Activated CD4-positive, alpha-beta T cell treated with anti-CD3 and anti-CD28 coated beads, Interleukin-2, amount 10 ng/mL, durations not matched to agents 24 days and 14 days (primary cell): ENCODE measurements at regions of chr3 and their contacts with region 1.

Region 1: GRCh38 chr3:157174649-157175498 is 14.9 kb upstream of the CCNL1 start:
- DNase-seq: peak; percentile 99
- H3K4me3 Mint-ChIP-seq: peak overlapping the region; percentile 89
- H3K27ac Mint-ChIP-seq: peak overlapping the region; percentile 99
- H3K4me1 Mint-ChIP-seq: peaks cover 25% of the 10 kb centered on the region
- H3K27me3 Mint-ChIP-seq: peaks cover 2% of the 10 kb centered on the region

Region 2: GRCh38 chr3:156554842-156555687 is 619.8 kb before region 1 on chr3 and contains the start of gene SSR3:
- intact Hi-C with region 1: loop called (anchors 2 kb)
- DNase-seq: peak; percentile 100
- H3K4me3 Mint-ChIP-seq: peak within 1 kb of the TSS; percentile 97
- H3K27ac Mint-ChIP-seq: peak within 1 kb of the TSS; percentile 96
- H3K4me1 Mint-ChIP-seq: peaks cover 48% of the 10 kb centered on the region
- H3K27me3 Mint-ChIP-seq: no peaks in the 10 kb centered on the region
- total RNA-seq, gene SSR3: 151 and 153 TPM in 2 replicates

Region 3: DNA sequence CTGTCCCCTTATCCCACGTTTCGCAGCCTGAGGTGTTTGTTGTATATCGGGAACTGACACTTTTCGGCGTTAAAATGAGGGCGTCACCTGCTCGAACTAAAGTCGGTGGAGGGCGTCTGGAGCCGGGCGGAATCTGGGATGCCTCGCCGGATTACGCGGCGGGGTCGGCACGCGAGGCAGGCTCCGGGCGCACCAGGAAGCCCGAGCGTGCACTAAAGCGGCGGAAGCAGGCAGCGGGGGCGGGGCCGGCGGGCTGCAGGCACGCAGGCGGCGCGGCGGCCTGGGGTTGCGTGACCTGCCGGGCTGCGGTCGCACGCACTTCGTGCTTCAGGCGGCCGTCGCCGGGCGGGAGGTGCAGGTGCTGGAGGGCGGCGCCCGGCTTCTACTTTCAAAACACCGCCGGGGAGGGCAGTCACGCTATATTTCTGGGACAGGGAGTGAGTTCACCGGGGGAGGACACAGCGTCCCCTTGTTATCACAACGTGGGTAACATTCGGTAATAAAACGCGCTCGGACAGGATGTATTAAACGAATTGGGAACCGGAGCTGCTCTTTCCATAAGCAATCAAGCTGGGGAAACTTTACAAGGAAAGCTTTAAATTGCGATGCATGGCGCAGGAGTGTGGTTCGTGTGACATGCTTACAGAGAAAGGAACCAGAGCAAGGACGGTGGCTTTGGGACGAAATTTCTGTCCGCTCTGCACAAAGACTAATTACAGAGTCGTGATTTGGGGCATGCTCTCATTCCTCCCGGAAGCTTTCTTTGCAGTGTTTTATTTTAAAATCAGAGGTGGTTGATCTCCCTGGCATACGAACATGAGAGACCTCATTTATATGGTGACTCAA is 357.9 kb before region 1 on chr3:
- intact Hi-C with region 1: loop called (anchors 1 kb)
- DNase-seq: peak; percentile 97
- H3K4me3 Mint-ChIP-seq: peak overlapping the region; percentile 92
- H3K27ac Mint-ChIP-seq: peak overlapping the region; percentile 98
- H3K4me1 Mint-ChIP-seq: peaks cover 52% of the 10 kb centered on the region
- H3K27me3 Mint-ChIP-seq: no peaks in the 10 kb centered on the region

Region 4: DNA sequence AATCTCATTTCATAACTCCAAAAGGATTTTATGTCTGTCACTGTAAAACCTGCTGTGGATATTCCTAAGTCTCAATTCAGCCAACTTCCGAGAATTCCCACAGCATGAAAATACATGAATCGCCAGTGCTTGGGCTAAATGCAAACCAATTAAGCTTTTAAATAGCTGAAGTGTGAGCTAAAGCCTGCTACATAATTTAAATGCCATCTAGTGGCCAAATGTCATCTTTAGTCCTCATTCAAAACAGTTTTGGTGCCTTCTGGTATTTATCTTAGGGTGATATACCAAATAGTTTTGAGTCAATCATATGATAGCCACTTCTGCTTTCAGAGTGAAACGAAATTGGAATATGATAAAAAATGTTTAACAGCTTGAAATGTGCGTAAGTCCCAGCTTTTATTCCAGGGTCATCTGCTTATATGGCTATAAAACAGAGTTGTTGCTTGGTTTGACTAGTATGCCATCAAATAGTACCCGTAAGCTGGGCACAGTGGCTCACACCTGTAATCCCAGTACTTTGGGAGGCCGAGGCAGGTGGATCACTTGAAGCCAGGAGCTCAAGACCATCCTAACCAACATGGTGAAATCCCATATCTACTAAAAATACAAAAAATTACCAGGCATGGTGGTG is 26.9 kb after region 1 on chr3:
- intact Hi-C with region 1: loop called (anchors 2 kb)
- DNase-seq: peak; percentile 58
- H3K4me3 Mint-ChIP-seq: no peak overlapping the region
- H3K27ac Mint-ChIP-seq: no peak overlapping the region
- H3K4me1 Mint-ChIP-seq: no peaks in the 10 kb centered on the region
- H3K27me3 Mint-ChIP-seq: peaks cover 5% of the 10 kb centered on the region

Region 5: GRCh38 chr3:157239082-157239704 is 64.3 kb after region 1 on chr3:
- intact Hi-C with region 1: loop called (anchors 1 kb)
- DNase-seq: peak; percentile 93
- H3K4me3 Mint-ChIP-seq: no peak overlapping the region
- H3K27ac Mint-ChIP-seq: no peak overlapping the region
- H3K4me1 Mint-ChIP-seq: peaks cover 3% of the 10 kb centered on the region
- H3K27me3 Mint-ChIP-seq: peaks cover 2% of the 10 kb centered on the region